Transverse colon (tissue), 4 donors: ENCODE measurements at regions of chrX and their contacts with region 1.

Region 1: GRCh38 chrX:110450050-110450449 is 91.4 kb downstream of the RTL9 start:
- DNase-seq: peak; percentile 76
- H3K4me3 ChIP-seq: no peak overlapping the region
- H3K27ac ChIP-seq: no peak overlapping the region
- H3K4me1 ChIP-seq: no peaks in the 10 kb centered on the region
- H3K27me3 ChIP-seq: no peaks in the 10 kb centered on the region
- CTCF ChIP-seq: peak; percentile 50 to 72 (median 56)
- EP300 ChIP-seq: no peak
- POLR2A ChIP-seq: no peak

Region 2: DNA sequence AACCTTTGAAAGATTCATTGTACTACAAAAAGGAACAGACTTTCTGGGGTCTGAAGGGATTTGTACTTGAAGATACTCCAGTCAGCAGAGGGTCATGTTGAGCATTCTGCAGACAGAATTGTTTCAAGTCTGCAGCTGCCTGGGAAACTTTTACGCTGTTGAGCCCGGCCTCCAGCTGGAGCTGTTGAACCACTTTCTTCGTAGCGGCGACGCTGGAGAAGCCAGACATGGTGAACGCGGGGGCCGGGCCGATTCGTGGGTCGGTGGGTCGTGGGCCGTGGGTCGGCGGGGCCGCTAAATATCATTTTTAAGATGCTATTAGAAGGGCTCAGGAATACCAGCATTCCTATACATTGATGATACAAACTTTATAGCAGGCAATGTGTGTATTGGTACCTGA is 103.4 kb before region 1 on chrX:
- in situ Hi-C with region 1: no loop called
- intact Hi-C with region 1: no loop called
- DNase-seq: no peak
- H3K4me3 ChIP-seq: no peak overlapping the region
- H3K27ac ChIP-seq: no peak overlapping the region
- H3K4me1 ChIP-seq: no peaks in the 10 kb centered on the region
- H3K27me3 ChIP-seq: no peaks in the 10 kb centered on the region
- CTCF ChIP-seq: no peak
- EP300 ChIP-seq: no peak
- POLR2A ChIP-seq: no peak

Region 3: GRCh38 chrX:110412971-110413721 is 36.9 kb before region 1 on chrX:
- in situ Hi-C with region 1: no loop called
- intact Hi-C with region 1: loop called (anchors 1 kb)
- DNase-seq: peak; percentile 69
- H3K4me3 ChIP-seq: no peak overlapping the region
- H3K27ac ChIP-seq: no peak overlapping the region
- H3K4me1 ChIP-seq: no peaks in the 10 kb centered on the region
- H3K27me3 ChIP-seq: no peaks in the 10 kb centered on the region
- CTCF ChIP-seq: peak; percentile 58 to 85 (median 71)
- EP300 ChIP-seq: no peak
- POLR2A ChIP-seq: no peak

Region 4: DNA sequence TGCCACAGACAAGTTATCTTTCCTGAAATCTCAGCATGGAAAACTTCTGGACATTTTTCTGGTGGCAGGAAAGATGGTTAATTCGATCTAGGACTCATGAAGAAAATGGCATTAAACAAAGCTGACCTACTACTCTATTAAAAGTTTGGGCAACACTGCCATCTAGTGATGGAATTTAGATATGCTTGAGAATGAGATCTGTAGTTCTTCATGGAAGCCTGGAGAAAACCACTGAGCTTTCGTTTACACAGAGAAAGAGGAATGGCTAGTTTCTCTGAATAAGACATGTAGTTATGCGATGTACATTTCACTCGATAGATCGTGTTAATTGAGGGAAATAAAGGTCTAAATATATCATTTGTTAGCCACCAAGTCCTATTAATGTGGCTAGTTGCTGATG is 397.3 kb after region 1 on chrX:
- in situ Hi-C with region 1: loop called (anchors 5 to 10 kb)
- intact Hi-C with region 1: loop called (anchors 1 kb)
- DNase-seq: no peak
- H3K4me3 ChIP-seq: no peak overlapping the region
- H3K27ac ChIP-seq: no peak overlapping the region
- H3K4me1 ChIP-seq: no peaks in the 10 kb centered on the region
- H3K27me3 ChIP-seq: no peaks in the 10 kb centered on the region
- CTCF ChIP-seq: peak; percentile 36 to 67 (median 42)
- EP300 ChIP-seq: no peak
- POLR2A ChIP-seq: no peak

Region 5: GRCh38 chrX:110853610-110854009 is 403.6 kb after region 1 on chrX:
- in situ Hi-C with region 1: loop called (anchors 5 to 10 kb)
- intact Hi-C with region 1: loop called (anchors 1 kb)
- DNase-seq: no peak
- H3K4me3 ChIP-seq: no peak overlapping the region
- H3K27ac ChIP-seq: no peak overlapping the region
- H3K4me1 ChIP-seq: no peaks in the 10 kb centered on the region
- H3K27me3 ChIP-seq: no peaks in the 10 kb centered on the region
- CTCF ChIP-seq: peak in 3 of 5 experiments; percentile 9 to 21 (median 21)
- EP300 ChIP-seq: no peak
- POLR2A ChIP-seq: no peak

Region 6: DNA sequence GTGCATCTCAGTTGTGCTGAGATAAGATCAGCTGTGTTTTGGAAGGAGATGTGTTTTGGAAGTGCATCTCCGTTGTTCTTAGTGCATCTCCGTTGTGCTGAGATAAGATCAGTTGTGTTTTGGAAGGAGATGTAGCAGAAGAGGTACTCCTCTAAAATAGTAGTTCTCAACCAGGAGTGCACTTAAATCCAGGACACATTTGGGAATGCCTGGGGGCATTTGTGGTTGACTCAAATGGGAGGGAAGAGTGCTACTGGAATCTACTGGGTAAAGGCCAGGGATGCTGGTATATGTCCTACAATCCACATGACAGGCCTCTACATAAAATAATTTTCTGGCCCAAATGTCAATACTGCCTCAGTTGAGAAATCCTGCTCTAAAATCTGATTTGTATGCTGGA is 416.4 kb after region 1 on chrX:
- in situ Hi-C with region 1: no loop called
- intact Hi-C with region 1: loop called (anchors 5 kb)
- DNase-seq: no peak
- H3K4me3 ChIP-seq: no peak overlapping the region
- H3K27ac ChIP-seq: no peak overlapping the region
- H3K4me1 ChIP-seq: no peaks in the 10 kb centered on the region
- H3K27me3 ChIP-seq: no peaks in the 10 kb centered on the region
- CTCF ChIP-seq: no peak
- EP300 ChIP-seq: no peak
- POLR2A ChIP-seq: no peak

Region 7: GRCh38 chrX:111445486-111445885 is 995.4 kb after region 1 on chrX:
- in situ Hi-C with region 1: no loop called
- intact Hi-C with region 1: loop called (anchors 5 kb)
- DNase-seq: no peak
- H3K4me3 ChIP-seq: no peak overlapping the region
- H3K27ac ChIP-seq: no peak overlapping the region
- H3K4me1 ChIP-seq: no peaks in the 10 kb centered on the region
- H3K27me3 ChIP-seq: no peaks in the 10 kb centered on the region
- CTCF ChIP-seq: peak; percentile 9 to 57 (median 31)
- EP300 ChIP-seq: no peak
- POLR2A ChIP-seq: no peak